ENCODE measurements at regions of chr7 and their contacts with region 1.

Region 1: DNA sequence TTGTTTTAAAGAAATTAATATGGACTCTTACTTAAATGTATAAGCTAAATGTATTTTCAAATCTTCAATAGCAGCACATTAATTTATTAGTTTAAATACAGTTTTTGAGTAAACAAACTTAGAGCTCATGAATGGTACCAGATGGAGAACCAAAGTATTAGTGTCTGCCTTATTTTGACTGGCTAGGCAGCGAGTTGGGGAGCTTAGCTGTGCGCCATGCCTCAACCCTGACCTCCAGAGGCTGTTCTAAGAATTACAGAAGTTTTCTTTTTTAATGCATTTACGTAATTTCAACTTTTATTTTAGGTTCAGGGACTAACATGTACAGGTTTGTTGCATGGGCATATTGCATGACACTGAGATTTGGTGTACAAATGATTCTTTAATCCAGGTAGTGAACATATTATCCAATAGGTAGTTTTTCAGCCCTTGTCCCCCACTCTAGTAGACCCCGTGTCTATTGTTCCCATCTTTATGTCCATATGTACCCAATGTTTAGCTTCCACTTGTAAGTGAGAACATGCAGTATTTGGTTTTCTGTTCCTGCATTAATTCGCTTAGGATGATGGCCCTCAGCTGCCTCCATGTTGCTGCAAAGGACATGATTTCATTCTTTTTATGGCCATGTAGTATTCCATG is 166.8 kb downstream of the IQUB start:
- DNase-seq: peak; percentile 57
- H3K4me3 ChIP-seq: no peak overlapping the region
- H3K27ac ChIP-seq: no peak overlapping the region
- H3K4me1 ChIP-seq: no peaks in the 10 kb centered on the region
- H3K27me3 ChIP-seq: no peaks in the 10 kb centered on the region
- CTCF ChIP-seq: peak; percentile 54 to 62
- POLR2A ChIP-seq: no peak

Region 2: GRCh38 chr7:122528879-122529481 is 838.6 kb before region 1 on chr7:
- CTCF ChIA-PET with region 1: interaction called, 5 read pairs
- POLR2A ChIA-PET with region 1: no interaction called
- dilution Hi-C with region 1: no loop called
- intact Hi-C with region 1: loop called (anchors 5 kb)
- DNase-seq: peak; percentile 68
- H3K4me3 ChIP-seq: no peak overlapping the region
- H3K27ac ChIP-seq: no peak overlapping the region
- H3K4me1 ChIP-seq: no peaks in the 10 kb centered on the region
- H3K27me3 ChIP-seq: no peaks in the 10 kb centered on the region
- CTCF ChIP-seq: peak; percentile 26 to 28
- POLR2A ChIP-seq: no peak

Region 3: DNA sequence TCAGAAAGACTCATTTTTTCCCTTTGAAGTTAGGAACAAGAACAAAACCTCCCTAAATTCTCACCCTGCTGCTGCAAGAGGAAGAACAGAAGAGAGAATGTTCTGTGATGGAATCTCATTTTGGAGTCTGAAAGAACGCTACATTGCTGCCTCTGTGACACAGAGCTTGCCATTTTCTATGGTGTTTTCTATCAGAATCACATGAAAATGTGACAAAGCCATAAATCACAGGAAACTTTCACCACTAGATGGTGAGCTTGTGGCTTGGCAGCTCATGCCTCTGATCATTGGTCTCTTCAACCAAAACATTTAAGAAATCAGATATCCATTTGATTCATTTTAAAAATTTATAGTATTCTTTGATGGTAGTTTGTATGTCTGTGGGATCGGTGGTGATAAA is 564.3 kb before region 1 on chr7:
- CTCF ChIA-PET with region 1: interaction called, 16 read pairs
- POLR2A ChIA-PET with region 1: no interaction called
- dilution Hi-C with region 1: no loop called
- intact Hi-C with region 1: no loop called
- DNase-seq: peak; percentile 74
- H3K4me3 ChIP-seq: no peak overlapping the region
- H3K27ac ChIP-seq: peak overlapping the region; percentile 46
- H3K4me1 ChIP-seq: peaks cover 16% of the 10 kb centered on the region
- H3K27me3 ChIP-seq: no peaks in the 10 kb centered on the region
- CTCF ChIP-seq: peak; percentile 35
- POLR2A ChIP-seq: no peak

Region 4: DNA sequence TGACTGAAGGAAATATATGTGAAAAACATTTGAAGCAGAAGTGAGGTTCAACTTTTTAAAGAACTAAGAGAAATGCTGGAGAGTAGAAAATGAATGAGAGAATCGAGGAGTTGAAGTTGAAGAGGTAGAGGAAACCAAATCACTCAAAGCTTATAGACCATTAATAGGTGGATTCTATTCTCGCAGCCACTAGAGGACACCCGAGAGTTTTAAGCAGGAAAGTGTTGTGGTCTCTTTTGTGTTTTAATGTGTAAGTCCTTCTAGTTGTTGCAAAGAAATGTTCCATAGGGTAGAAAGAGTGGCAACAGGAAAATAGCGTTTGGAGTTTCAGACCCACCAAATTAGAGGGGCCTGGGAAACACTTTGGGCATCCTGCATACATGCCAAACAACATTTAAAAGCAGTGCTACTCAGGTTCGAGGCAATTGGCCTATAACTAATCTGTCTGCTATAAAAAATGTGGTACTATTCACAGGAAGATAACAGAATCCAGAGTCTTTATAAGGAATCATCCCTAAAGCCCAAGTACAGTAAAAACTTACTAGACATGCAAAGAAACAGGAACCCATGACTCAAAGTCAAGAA is 296.8 kb before region 1 on chr7:
- CTCF ChIA-PET with region 1: interaction called, 9 read pairs
- POLR2A ChIA-PET with region 1: no interaction called
- dilution Hi-C with region 1: no loop called
- intact Hi-C with region 1: loop called (anchors 10 kb)
- DNase-seq: peak; percentile 10
- H3K4me3 ChIP-seq: no peak overlapping the region
- H3K27ac ChIP-seq: no peak overlapping the region
- H3K4me1 ChIP-seq: no peaks in the 10 kb centered on the region
- H3K27me3 ChIP-seq: peaks cover 2 to 7% of the 10 kb centered on the region in 2 experiments
- CTCF ChIP-seq: peak; percentile 17 to 34
- POLR2A ChIP-seq: no peak

Region 5: DNA sequence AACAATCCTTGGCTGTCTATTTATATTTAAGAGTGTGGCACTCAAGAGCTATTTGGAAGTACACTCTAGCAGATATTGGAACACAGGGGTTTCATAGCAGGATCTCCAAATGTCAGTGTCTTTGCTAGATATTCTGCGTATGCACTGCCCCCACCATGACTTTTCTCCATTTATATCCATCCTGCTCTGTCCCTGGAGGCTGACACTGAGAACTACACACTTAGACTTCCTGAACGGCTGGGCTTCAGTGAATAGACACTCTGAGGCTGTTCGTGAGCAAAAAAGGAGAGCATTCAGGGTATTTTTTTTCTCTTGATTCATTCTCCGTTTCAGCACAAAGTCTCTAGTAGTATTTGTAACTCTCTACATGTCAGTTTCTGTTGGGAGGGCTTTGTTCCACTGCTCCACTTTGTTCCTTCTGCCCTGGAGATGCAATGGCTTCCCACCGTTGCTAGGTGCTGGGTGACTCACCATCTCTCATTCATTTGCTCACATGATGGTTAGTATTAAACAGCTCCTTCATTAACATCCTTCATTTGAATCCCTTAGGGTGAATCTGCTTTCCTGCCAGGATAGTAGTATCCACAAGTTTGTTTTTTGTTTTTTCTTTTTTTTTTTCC is 11.9 kb before region 1 on chr7:
- CTCF ChIA-PET with region 1: interaction called, 14 read pairs
- POLR2A ChIA-PET with region 1: no interaction called
- dilution Hi-C with region 1: no loop called
- intact Hi-C with region 1: no loop called
- DNase-seq: no peak
- H3K4me3 ChIP-seq: no peak overlapping the region
- H3K27ac ChIP-seq: no peak overlapping the region
- H3K4me1 ChIP-seq: no peaks in the 10 kb centered on the region
- H3K27me3 ChIP-seq: no peaks in the 10 kb centered on the region
- CTCF ChIP-seq: no peak
- POLR2A ChIP-seq: no peak